Mammary epithelial cell (primary cell): ENCODE measurements at regions of chr17 and their contacts with region 1.

Region 1: GRCh38 chr17:66200685-66201092 is 8.8 kb upstream of the CEP112 start:
- DNase-seq: peak; percentile 66
- H3K4me3 ChIP-seq: no peak overlapping the region
- H3K27ac ChIP-seq: no peak overlapping the region
- H3K4me1 ChIP-seq: no peaks in the 10 kb centered on the region
- H3K27me3 ChIP-seq: no peaks in the 10 kb centered on the region
- CTCF ChIP-seq: peak; percentile 67 to 70

Region 2: GRCh38 chr17:66248285-66248684 is 47.6 kb after region 1 on chr17:
- CTCF ChIA-PET with region 1: no interaction called
- dilution Hi-C with region 1: no loop called
- in situ Hi-C with region 1: no loop called
- intact Hi-C with region 1: loop called (anchors 2 kb)
- DNase-seq: no peak
- H3K4me3 ChIP-seq: no peak overlapping the region
- H3K27ac ChIP-seq: no peak overlapping the region
- H3K4me1 ChIP-seq: peaks cover 9% of the 10 kb centered on the region
- H3K27me3 ChIP-seq: no peaks in the 10 kb centered on the region
- CTCF ChIP-seq: no peak

Region 3: GRCh38 chr17:66301797-66302741 is 101.4 kb after region 1 on chr17 and contains the start of gene PRKCA:
- CTCF ChIA-PET with region 1: no interaction called
- dilution Hi-C with region 1: no loop called
- in situ Hi-C with region 1: no loop called
- intact Hi-C with region 1: loop called (anchors 2 kb)
- DNase-seq: peak; percentile 73
- H3K4me3 ChIP-seq: peak within 1 kb of the TSS; percentile 80 to 97 (median 84)
- H3K27ac ChIP-seq: peak within 1 kb of the TSS; percentile 14
- H3K4me1 ChIP-seq: peaks cover 15% of the 10 kb centered on the region
- H3K27me3 ChIP-seq: no peaks in the 10 kb centered on the region
- CTCF ChIP-seq: no peak
- total RNA-seq, gene PRKCA: 6.0 to 15.5 TPM

Region 4: GRCh38 chr17:66625311-66625775 is 424.7 kb after region 1 on chr17:
- CTCF ChIA-PET with region 1: no interaction called
- dilution Hi-C with region 1: no loop called
- in situ Hi-C with region 1: no loop called
- intact Hi-C with region 1: loop called (anchors 1 kb)
- DNase-seq: peak; percentile 19
- H3K4me3 ChIP-seq: no peak overlapping the region
- H3K27ac ChIP-seq: no peak overlapping the region
- H3K4me1 ChIP-seq: no peaks in the 10 kb centered on the region
- H3K27me3 ChIP-seq: no peaks in the 10 kb centered on the region
- CTCF ChIP-seq: peak; percentile 32 to 50

Region 5: GRCh38 chr17:66900126-66901010 is 699.7 kb after region 1 on chr17:
- CTCF ChIA-PET with region 1: no interaction called
- dilution Hi-C with region 1: no loop called
- in situ Hi-C with region 1: loop called (anchors 10 to 25 kb)
- intact Hi-C with region 1: loop called (anchors 1 kb)
- DNase-seq: no peak
- H3K4me3 ChIP-seq: no peak overlapping the region
- H3K27ac ChIP-seq: peak overlapping the region; percentile 3
- H3K4me1 ChIP-seq: peaks cover 25% of the 10 kb centered on the region
- H3K27me3 ChIP-seq: no peaks in the 10 kb centered on the region
- CTCF ChIP-seq: peak; percentile 30 to 33